ENCODE measurements at regions of chr6 and their contacts with region 1.

Region 1: DNA sequence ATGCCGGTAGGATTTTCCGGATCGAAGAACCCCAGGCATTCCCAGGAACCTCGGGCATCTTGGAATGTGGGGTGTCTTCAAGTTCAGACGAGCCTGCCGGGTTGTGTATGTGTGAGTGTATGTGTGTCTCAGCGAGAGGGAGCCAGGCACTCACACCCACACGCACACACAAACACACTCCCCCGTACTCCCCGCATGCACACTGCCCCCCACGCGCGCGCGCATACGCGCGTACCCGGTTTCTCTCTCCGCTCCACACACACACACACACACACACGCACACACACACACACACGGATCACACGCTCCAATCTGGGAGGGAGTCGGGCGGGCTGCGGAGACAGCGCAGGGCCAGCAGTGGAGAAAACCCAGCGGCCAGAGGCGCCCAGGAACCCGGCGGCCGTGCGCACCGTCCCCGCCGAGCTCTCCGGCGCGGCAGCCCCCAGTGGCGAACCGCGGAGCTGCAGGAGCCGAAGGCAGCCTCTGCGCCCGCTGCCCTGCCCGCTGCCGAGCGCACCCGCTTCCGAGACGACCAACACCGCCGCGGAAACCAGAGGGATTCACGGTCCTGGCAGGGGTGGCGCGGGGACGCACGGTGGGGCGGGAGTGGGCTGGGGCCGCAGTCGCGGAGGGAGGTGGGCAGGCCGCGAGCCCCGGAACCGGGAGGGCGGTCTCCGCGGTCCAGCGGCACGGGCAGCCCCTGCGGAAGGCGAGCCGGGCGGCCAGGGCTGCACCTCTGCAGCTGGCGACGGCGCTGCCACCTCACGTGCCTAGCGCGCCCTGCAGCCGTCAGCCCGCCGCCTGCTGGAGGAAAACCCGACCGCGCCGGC is at the start of gene LRFN2:
- DNase-seq: peak in 1 of 2 experiments; percentile 93
- H3K4me3 ChIP-seq: peak within 1 kb of the TSS; percentile 56 to 76 (median 72)
- H3K27ac ChIP-seq: no peak within 1 kb of the TSS
- H3K4me1 ChIP-seq: peaks cover 13 to 24% (median 19%) of the 10 kb centered on the region in 4 experiments
- H3K27me3 ChIP-seq: peaks cover 3 to 23% (median 19%) of the 10 kb centered on the region in 4 experiments; a peak in 6 of 7 replicates
- CTCF ChIP-seq: peak; percentile 70 to 91 (median 89)
- EP300 ChIP-seq: no peak
- POLR2A ChIP-seq: peak in 1 of 2 experiments; percentile 47; a peak in 1 of 3 replicates
- RAD21 ChIP-seq: peak; percentile 64 to 73
- total RNA-seq, gene LRFN2: 2.3 TPM in 2 replicates

Region 2: DNA sequence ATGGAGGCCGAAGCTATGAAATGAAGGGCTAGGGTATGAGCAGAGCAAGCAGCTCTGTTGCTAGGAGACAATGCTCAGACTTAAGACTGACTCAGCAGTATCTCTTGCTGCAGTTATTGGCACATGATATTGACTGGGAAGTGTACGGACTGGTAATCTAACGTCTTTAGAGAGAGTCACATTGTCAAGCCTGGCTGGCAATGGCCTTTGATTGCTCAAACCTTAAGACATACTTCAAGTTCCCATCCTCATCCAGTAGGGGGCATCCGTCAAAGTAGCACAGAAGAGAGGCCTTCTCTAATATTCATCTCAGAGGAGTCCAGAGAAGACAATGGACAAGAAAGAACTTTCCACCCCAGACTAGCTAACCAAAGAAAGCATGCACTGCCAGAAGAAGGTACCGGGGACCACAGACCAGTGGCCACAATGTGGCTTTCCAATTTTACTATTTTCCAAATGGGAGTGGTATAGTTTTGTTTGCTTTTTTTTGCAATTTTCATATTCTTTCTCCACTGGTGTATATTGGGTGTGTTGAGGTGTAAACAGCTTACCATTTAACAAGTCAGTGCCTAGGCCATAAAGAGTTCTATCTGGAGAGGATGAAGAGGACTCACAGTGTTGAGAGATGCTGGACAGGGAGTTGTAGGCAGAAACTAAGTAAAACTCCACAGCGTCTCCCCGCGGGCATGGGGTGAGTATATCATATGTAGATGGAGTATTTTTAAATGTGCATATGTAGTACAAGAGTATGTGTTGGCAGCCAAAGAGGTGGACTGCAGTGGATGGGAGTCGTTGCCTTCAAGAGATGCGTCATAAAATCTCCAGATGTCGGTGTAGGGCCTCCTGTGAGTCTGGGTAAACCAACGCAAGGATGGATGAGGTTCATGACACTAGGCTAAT is 37.0 kb before region 1 on chr6:
- CTCF ChIA-PET with region 1: interaction called, 14 read pairs
- POLR2A ChIA-PET with region 1: interaction called, 4 read pairs
- DNase-seq: no peak
- H3K4me3 ChIP-seq: no peak overlapping the region
- H3K27ac ChIP-seq: no peak overlapping the region
- H3K4me1 ChIP-seq: peaks cover 4 to 17% (median 7%) of the 10 kb centered on the region in 4 experiments
- H3K27me3 ChIP-seq: no peaks in the 10 kb centered on the region
- CTCF ChIP-seq: peak in 2 of 3 experiments; percentile 46 to 73; a peak in 3 of 4 replicates
- EP300 ChIP-seq: no peak
- POLR2A ChIP-seq: no peak
- RAD21 ChIP-seq: peak; percentile 24 to 45; a peak in 3 of 4 replicates

Region 3: GRCh38 chr6:40569162-40569910 is 18.1 kb before region 1 on chr6:
- CTCF ChIA-PET with region 1: interaction called, 69 read pairs
- POLR2A ChIA-PET with region 1: interaction called, 4 read pairs
- DNase-seq: no peak
- H3K4me3 ChIP-seq: no peak overlapping the region
- H3K27ac ChIP-seq: no peak overlapping the region
- H3K4me1 ChIP-seq: no peaks in the 10 kb centered on the region; a peak in 1 of 7 replicates
- H3K27me3 ChIP-seq: no peaks in the 10 kb centered on the region
- CTCF ChIP-seq: no peak
- EP300 ChIP-seq: no peak
- POLR2A ChIP-seq: no peak
- RAD21 ChIP-seq: no peak

Region 4: GRCh38 chr6:40599555-40599954 is 12.1 kb after region 1 on chr6:
- CTCF ChIA-PET with region 1: interaction called, 21 read pairs
- POLR2A ChIA-PET with region 1: interaction called, 3 read pairs
- DNase-seq: no peak
- H3K4me3 ChIP-seq: no peak overlapping the region
- H3K27ac ChIP-seq: no peak overlapping the region
- H3K4me1 ChIP-seq: no peaks in the 10 kb centered on the region
- H3K27me3 ChIP-seq: no peaks in the 10 kb centered on the region
- CTCF ChIP-seq: no peak
- EP300 ChIP-seq: no peak
- POLR2A ChIP-seq: no peak
- RAD21 ChIP-seq: no peak

Measured in H1 (cell line).